ENCODE measurements at regions of chr13 and their contacts with region 1.

Region 1: GRCh38 chr13:46648166-46648635 is 95.2 kb downstream of the LRCH1 start:
- DNase-seq: peak; percentile 13
- ATAC-seq: peak; percentile 65; the same call in 1 of the 2 replicates
- H3K4me3 ChIP-seq: no peak overlapping the region
- H3K27ac ChIP-seq: no peak overlapping the region
- H3K4me1 ChIP-seq: no peaks in the 10 kb centered on the region
- H3K27me3 ChIP-seq: no peaks in the 10 kb centered on the region
- CTCF ChIP-seq: no peak

Region 2: DNA sequence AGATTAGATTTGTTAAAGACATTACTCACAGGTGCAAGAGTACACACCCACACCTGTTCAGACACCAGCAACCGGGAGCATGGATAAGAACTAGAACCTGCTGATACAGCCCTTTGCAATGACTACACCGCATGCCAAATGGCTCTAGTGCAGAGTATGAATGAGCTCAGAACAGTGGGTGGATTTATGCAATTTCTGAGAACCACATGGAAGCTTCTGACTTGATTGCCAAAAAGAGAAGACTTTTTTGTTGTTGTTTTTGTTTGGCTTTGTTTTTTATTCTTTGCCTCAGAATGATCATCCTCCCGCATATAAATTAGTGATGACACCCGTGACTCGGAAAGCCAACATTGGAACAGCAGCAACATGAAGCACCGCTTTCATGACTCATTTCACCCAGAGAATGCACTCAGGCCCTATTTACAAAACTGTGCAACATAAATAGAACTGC is 172.6 kb before region 1 on chr13:
- CTCF ChIA-PET with region 1: no interaction called
- POLR2A ChIA-PET with region 1: no interaction called
- intact Hi-C with region 1: no loop called
- DNase-seq: peak; percentile 40
- ATAC-seq: no peak
- H3K4me3 ChIP-seq: no peak overlapping the region
- H3K27ac ChIP-seq: no peak overlapping the region
- H3K4me1 ChIP-seq: no peaks in the 10 kb centered on the region
- H3K27me3 ChIP-seq: no peaks in the 10 kb centered on the region
- CTCF ChIP-seq: no peak

Region 3: GRCh38 chr13:46603165-46603603 is 45.0 kb before region 1 on chr13:
- CTCF ChIA-PET with region 1: no interaction called
- POLR2A ChIA-PET with region 1: no interaction called
- intact Hi-C with region 1: loop called (anchors 5 kb)
- DNase-seq: peak; percentile 11
- ATAC-seq: no peak
- H3K4me3 ChIP-seq: no peak overlapping the region
- H3K27ac ChIP-seq: no peak overlapping the region
- H3K4me1 ChIP-seq: peaks cover 46% of the 10 kb centered on the region
- H3K27me3 ChIP-seq: no peaks in the 10 kb centered on the region
- CTCF ChIP-seq: peak; percentile 53